ENCODE measurements at regions of chr2 and their contacts with region 1.

Region 1: GRCh38 chr2:41400088-41400665 is 647.6 kb upstream of the PKDCC start:
- DNase-seq: peak; percentile 41
- H3K4me3 Mint-ChIP-seq: no peak overlapping the region
- H3K27ac Mint-ChIP-seq: no peak overlapping the region
- H3K4me1 Mint-ChIP-seq: no peaks in the 10 kb centered on the region
- H3K27me3 Mint-ChIP-seq: no peaks in the 10 kb centered on the region
- CTCF ChIP-seq: peak; percentile 28

Region 2: GRCh38 chr2:40844353-40845277 is 555.6 kb before region 1 on chr2:
- CTCF ChIA-PET with region 1: interaction called, 4 read pairs
- intact Hi-C with region 1: loop called (anchors 5 kb)
- DNase-seq: no peak
- H3K4me3 Mint-ChIP-seq: no peak overlapping the region
- H3K27ac Mint-ChIP-seq: no peak overlapping the region
- H3K4me1 Mint-ChIP-seq: no peaks in the 10 kb centered on the region
- H3K27me3 Mint-ChIP-seq: no peaks in the 10 kb centered on the region
- CTCF ChIP-seq: no peak

Region 3: GRCh38 chr2:41420219-41420618 is 20.0 kb after region 1 on chr2:
- CTCF ChIA-PET with region 1: no interaction called
- intact Hi-C with region 1: no loop called
- DNase-seq: no peak
- H3K4me3 Mint-ChIP-seq: no peak overlapping the region
- H3K27ac Mint-ChIP-seq: no peak overlapping the region
- H3K4me1 Mint-ChIP-seq: no peaks in the 10 kb centered on the region
- H3K27me3 Mint-ChIP-seq: no peaks in the 10 kb centered on the region
- CTCF ChIP-seq: no peak